ENCODE measurements at regions of chr19 and their contacts with region 1.

Region 1: DNA sequence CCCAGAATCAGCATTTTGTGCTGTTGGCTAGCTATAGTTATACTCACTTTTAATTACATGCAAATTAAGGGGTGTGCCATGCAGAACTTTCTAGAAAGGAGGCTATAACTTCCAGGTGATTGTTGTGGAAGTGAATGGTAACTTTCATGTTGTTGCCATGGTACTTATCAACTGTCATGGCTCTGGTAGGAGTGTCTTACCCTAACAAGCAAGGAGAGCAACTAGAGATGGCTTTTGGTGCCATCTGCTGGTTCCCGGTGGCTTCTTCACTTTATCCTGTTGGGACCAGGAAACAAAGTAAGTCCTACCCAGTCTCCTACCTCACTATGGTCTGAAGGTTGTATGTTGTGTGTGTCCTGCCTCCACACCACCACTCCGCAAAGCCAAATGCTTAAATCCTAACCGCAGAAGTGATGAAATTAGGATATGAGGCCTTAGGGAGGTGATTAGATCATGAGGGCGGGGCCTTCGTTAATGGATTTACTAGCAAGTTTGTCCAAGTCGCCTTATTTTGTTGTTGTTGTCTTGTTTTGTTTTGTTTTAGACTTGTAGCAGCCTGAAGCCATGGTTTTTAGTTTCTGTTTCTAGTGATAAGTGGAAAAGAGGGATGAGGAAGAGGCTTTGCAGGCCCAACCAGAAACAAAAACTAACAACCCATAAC is 22.6 kb downstream of the FBXL12 start:
- DNase-seq: peak; percentile 88
- H3K4me3 ChIP-seq: no peak overlapping the region
- H3K27ac ChIP-seq: peak overlapping the region in 1 of 4 donors; percentile 24
- H3K4me1 ChIP-seq: peaks cover 0 to 7% (median 5%) of the 10 kb centered on the region in 4 donors
- H3K27me3 ChIP-seq: no peaks in the 10 kb centered on the region
- CTCF ChIP-seq: peak; percentile 70 to 82 (median 72)
- EP300 ChIP-seq: no peak
- POLR2A ChIP-seq: no peak

Region 2: DNA sequence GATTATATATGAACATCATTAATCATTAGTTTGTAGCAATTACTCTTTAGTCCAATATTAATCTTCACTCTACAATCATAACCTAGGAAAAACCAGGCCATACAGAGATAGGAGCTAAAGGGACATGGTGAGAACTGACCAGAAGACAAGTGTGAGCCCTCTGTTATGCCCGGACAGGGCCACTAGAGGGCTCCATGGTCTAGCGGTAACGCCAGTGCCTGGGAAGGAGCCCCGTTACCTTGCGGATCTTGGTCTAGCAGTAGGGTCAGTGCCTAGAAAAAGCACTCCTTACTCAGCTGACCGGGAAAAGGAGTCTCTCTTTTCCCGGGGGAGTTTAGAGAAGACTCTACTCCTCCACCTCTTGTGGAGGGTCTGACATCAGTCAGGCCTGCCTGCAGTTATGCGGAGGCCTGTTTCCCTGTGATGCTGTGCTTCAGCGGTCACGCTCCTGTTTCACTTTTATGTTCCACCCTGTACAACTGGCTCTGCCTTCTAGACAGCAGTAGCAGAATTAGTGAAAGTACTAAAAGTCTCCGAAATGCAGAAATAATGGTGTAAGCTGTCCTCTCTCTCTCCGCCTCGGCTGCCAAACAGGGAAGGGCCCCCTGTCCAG is 590.6 kb before region 1 on chr19:
- intact Hi-C with region 1: loop called (anchors 2 kb)
- DNase-seq: peak; percentile 81
- H3K4me3 ChIP-seq: peak overlapping the region in 3 of 4 donors; percentile 28 to 42 (median 28)
- H3K27ac ChIP-seq: no peak overlapping the region
- H3K4me1 ChIP-seq: peaks cover 0 to 6% (median 2%) of the 10 kb centered on the region in 4 donors
- H3K27me3 ChIP-seq: no peaks in the 10 kb centered on the region
- CTCF ChIP-seq: peak; percentile 7 to 91 (median 78)
- EP300 ChIP-seq: no peak
- POLR2A ChIP-seq: no peak

Region 3: DNA sequence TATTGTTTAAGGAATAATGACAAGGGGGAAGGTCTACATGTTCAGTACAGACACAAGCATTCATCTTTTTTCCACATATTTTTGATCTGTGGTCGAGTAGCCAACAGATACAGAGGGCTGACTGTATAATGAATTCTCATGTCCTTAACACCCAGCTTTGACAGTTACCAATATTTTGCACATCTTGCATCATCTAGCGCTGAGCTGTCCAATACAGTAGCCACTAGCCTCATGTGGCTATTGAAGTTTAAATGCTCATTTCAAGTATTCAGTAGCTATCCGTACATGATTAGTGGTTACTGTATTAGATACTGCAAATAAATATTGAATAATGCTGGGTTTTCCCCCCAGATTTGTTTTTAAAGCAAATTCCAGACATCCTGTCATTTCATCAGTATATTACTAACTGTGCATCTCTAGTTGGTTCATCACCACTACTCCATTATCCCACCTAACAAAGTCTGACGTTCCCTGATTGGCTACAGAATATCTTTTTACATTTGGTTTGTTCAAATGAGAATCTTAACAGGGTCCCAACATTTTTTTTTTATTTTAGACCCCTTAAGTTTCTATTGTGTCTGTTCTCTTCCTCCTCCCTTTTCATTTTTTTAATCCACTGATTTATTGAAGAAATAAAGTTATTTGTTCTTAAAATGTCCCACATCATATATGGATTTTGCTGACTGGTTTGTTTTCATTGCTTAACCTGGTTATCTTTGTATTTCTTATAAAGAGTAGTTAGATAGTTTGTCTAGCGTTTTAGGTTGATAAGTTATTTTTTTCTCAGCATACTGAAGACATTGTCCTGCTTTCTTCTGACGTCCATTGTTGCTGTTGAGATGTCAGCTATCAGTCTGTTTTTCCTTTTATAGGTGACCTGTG is 425.3 kb before region 1 on chr19:
- intact Hi-C with region 1: no loop called
- DNase-seq: no peak
- H3K4me3 ChIP-seq: no peak overlapping the region
- H3K27ac ChIP-seq: no peak overlapping the region
- H3K4me1 ChIP-seq: no peaks in the 10 kb centered on the region
- H3K27me3 ChIP-seq: no peaks in the 10 kb centered on the region
- CTCF ChIP-seq: no peak
- EP300 ChIP-seq: no peak
- POLR2A ChIP-seq: no peak

Region 4: DNA sequence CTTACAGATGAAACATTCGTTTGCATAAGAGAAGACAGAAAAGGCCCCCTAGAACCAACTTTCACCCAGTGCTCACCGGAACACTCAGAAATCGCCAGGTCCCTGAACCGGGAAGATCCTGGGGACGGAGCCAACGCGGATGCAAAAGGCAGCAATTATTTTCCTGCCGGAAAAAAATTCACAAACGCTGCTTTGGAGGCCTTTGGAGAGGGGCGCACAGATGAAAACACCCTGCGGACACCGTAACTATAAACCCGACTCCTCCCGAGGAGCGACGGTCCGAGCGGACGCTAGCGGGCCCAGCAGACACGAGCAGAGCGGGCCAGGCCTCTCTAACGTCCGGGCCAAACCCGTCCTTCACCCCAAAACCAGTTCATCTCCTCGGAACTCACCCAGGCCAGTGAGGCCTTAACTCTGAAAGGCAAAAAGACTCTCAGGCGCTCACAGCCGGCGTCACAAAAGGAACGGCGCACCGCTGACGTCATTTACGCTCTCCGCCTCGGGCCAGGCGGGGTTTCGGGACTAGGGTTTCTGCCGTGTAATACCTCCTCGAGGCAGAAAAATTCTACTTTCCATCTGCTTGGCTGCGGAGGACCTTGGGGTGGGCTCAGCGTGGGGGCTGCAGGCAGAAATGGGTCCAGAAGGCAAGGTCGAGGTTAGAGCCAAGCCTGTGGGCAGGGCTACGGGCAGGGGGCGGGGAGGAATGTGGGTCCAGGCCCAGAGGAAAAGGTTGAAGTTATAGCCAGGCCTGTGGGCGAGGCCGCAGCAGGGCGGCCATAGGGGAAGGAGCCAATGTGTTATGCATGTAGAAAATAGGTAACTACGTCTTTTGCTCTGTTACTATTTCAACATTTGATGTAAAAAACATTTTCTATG is 257.8 kb before region 1 on chr19 and contains the start of gene ZNF426:
- intact Hi-C with region 1: loop called (anchors 5 kb)
- DNase-seq: peak; percentile 93
- H3K4me3 ChIP-seq: peak within 1 kb of the TSS; percentile 54 to 76 (median 72)
- H3K27ac ChIP-seq: peak within 1 kb of the TSS; percentile 91 to 95 (median 92)
- H3K4me1 ChIP-seq: peaks cover 0 to 18% (median 10%) of the 10 kb centered on the region in 4 donors
- H3K27me3 ChIP-seq: no peaks in the 10 kb centered on the region
- CTCF ChIP-seq: no peak
- EP300 ChIP-seq: no peak
- POLR2A ChIP-seq: peak in 1 of 2 donors; percentile 5
- total RNA-seq, gene ZNF426: 11.4 to 18.1 (median 12.7) TPM

Region 5: DNA sequence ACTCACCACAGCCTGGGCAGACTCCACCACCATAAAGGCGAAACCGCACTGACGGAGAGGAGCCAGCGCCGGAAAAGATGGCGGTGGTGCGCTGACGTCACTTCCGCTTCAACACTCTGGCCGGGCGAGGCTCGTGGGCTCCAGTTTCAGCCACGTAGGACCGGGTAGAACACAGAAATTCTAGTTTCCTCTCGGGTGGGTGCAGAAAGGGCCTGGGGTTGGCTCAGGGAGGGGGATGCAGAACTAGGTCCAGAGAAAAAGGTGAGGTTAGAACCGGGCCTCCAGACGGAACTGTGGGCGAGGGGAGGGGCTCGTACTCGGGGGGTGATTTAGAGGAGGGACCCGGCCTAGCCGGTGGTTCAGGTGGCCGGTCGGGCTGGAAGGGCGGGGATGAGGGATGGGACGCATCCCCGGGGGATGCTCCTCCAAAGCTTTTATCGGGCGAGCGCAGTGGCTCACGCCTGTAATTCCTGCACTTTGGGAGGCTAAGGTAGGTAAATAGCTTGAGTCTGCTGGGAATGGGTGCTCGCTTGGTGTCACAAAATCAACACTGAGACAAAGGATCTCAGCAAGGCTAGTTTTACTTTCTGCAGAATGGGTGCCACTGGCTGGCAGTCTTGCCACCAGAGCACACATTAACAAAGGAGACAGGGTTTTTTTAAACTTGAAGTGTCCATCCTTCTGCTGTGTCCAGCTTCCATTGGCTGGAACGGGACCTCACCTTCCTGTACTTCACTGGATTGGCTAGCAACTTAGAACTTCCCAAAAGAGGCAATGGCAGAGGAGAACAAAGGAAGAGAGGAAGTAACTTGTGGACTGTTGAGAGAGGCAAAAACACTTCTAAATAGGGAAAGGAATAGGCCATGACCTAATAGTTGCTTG is 174.8 kb before region 1 on chr19 and contains the start of gene ZNF561:
- intact Hi-C with region 1: loop called (anchors 2 kb)
- DNase-seq: peak; percentile 90
- H3K4me3 ChIP-seq: peak within 1 kb of the TSS; percentile 73 to 88 (median 76)
- H3K27ac ChIP-seq: peak within 1 kb of the TSS; percentile 87 to 91 (median 90)
- H3K4me1 ChIP-seq: peaks cover 0 to 49% (median 35%) of the 10 kb centered on the region in 4 donors
- H3K27me3 ChIP-seq: no peaks in the 10 kb centered on the region
- CTCF ChIP-seq: no peak
- EP300 ChIP-seq: no peak
- POLR2A ChIP-seq: no peak
- total RNA-seq, gene ZNF561: 30.3 to 41.3 (median 31.5) TPM

Region 6: GRCh38 chr19:9818734-9819589 is 22.7 kb after region 1 on chr19 and contains the start of gene FBXL12:
- intact Hi-C with region 1: loop called (anchors 2 kb)
- DNase-seq: peak; percentile 100
- H3K4me3 ChIP-seq: peak within 1 kb of the TSS; percentile 59 to 90 (median 86)
- H3K27ac ChIP-seq: peak within 1 kb of the TSS; percentile 86 to 94 (median 92)
- H3K4me1 ChIP-seq: peaks cover 0 to 27% (median 19%) of the 10 kb centered on the region in 4 donors
- H3K27me3 ChIP-seq: no peaks in the 10 kb centered on the region
- CTCF ChIP-seq: no peak
- EP300 ChIP-seq: no peak
- POLR2A ChIP-seq: peak; percentile 78 to 89
- total RNA-seq, gene FBXL12: 18.3 to 31.9 (median 26.6) TPM

Region 7: DNA sequence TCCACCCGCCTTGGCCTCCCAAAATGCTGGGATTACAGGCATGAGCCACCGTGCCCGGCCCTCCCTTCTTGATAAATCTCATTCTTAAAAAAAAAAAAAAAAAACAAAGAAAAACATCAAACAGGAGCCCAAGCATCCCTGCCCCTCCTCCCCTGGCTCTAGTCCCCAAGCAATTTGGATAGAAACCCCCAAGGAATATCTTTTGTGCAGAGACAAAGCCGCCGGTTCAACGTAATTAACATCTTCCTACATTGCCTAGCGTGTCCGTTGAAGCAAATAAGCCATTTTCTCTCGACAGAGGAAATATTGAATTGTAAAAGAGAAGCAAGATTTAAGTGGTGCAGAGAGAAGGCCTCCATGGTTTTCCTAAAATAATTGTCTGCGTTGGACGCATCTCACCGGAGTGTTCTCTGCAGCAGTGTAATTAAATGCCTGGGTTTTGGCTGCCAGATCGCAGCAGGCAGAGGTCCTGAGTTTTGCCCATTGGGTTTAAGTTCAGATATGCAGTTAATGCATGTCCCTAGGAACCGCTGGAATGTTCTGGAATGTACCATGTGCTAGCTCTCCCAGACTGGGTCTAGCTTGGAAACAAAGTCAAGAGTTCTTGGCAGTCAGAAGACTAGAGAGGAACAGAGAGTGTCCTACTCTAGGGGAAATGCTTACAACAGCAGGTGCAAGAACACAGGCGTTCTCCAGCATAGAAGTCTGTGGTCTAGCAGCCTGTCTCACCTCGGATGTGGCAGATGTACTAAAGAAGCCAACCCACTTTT is 69.7 kb after region 1 on chr19:
- intact Hi-C with region 1: no loop called
- DNase-seq: no peak
- H3K4me3 ChIP-seq: no peak overlapping the region
- H3K27ac ChIP-seq: no peak overlapping the region
- H3K4me1 ChIP-seq: no peaks in the 10 kb centered on the region
- H3K27me3 ChIP-seq: no peaks in the 10 kb centered on the region
- CTCF ChIP-seq: no peak
- EP300 ChIP-seq: no peak
- POLR2A ChIP-seq: no peak

Region 8: GRCh38 chr19:10292206-10292788 is 496.1 kb after region 1 on chr19:
- intact Hi-C with region 1: no loop called
- DNase-seq: peak; percentile 80
- H3K4me3 ChIP-seq: peak overlapping the region in 2 of 4 donors; percentile 36 to 37
- H3K27ac ChIP-seq: no peak overlapping the region
- H3K4me1 ChIP-seq: peaks cover 0 to 73% (median 62%) of the 10 kb centered on the region in 4 donors
- H3K27me3 ChIP-seq: peaks cover 84 to 100% (median 98%) of the 10 kb centered on the region in 3 donors
- CTCF ChIP-seq: no peak
- EP300 ChIP-seq: no peak
- POLR2A ChIP-seq: no peak

Measured in sigmoid colon (tissue), 7 donors.